ENCODE measurements at regions of chr5 and their contacts with region 1.

Region 1: DNA sequence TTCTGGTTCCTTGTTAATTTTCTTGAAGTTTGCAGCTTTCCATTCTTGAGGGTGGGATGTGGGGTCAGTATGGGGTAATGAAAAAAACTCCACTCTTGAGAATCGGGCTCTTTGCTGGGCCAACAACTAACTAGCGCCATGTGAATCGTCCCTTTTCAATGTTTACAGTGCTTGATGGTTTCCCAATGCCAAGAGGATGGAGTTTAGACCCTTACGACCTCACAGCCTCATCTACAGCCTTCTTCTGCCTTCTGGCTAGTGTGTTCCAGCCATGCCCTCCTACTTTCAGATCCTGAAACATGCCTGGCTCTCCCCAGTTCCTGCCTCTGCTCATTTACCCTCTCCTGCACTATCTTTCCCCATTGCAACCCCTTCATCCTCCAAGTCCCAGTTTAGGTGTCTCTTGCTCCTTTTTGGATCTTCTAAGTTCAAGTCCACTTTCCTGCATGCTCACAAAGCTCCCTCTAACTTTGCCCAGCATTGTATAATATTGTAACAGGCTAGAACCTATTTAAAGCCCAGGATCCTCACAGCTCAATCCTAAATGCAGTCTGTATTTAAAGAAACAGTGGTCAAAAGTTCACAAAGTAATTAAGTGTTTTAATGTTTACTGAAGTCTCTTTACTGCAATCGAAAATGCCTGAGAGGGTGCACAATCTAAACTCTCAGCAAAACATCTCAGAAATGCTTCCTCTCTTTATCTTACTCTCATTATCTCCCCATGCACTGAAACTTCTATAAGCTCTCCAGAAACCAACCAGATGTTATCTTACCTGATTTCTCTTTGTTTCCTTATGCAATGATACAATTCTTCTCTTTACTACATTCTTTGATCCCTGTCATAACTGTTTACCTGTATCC is 20.6 kb upstream of the CAST start:
- DNase-seq: peak; percentile 61 to 73
- H3K4me3 ChIP-seq: no peak overlapping the region
- H3K4me3 Mint-ChIP-seq: peak overlapping the region; percentile 55
- H3K27ac Mint-ChIP-seq: peak overlapping the region; percentile 86
- H3K4me1 ChIP-seq: peaks cover 61% of the 10 kb centered on the region
- H3K4me1 Mint-ChIP-seq: peaks cover 49% of the 10 kb centered on the region
- H3K27me3 ChIP-seq: no peaks in the 10 kb centered on the region
- H3K27me3 Mint-ChIP-seq: no peaks in the 10 kb centered on the region
- CTCF ChIP-seq: no peak

Region 2: GRCh38 chr5:96402500-96402899 is 239.1 kb before region 1 on chr5:
- CTCF ChIA-PET with region 1: no interaction called
- POLR2A ChIA-PET with region 1: no interaction called
- intact Hi-C with region 1: no loop called
- DNase-seq: no peak
- H3K4me3 ChIP-seq: no peak overlapping the region
- H3K4me3 Mint-ChIP-seq: no peak overlapping the region
- H3K27ac Mint-ChIP-seq: no peak overlapping the region
- H3K4me1 ChIP-seq: no peaks in the 10 kb centered on the region
- H3K4me1 Mint-ChIP-seq: no peaks in the 10 kb centered on the region
- H3K27me3 ChIP-seq: no peaks in the 10 kb centered on the region
- H3K27me3 Mint-ChIP-seq: peaks cover 3% of the 10 kb centered on the region
- CTCF ChIP-seq: no peak

Region 3: GRCh38 chr5:96562614-96563013 is 79.0 kb before region 1 on chr5:
- CTCF ChIA-PET with region 1: no interaction called
- POLR2A ChIA-PET with region 1: no interaction called
- intact Hi-C with region 1: no loop called
- DNase-seq: no peak
- H3K4me3 ChIP-seq: no peak overlapping the region
- H3K4me3 Mint-ChIP-seq: no peak overlapping the region
- H3K27ac Mint-ChIP-seq: no peak overlapping the region
- H3K4me1 ChIP-seq: no peaks in the 10 kb centered on the region
- H3K4me1 Mint-ChIP-seq: no peaks in the 10 kb centered on the region
- H3K27me3 ChIP-seq: peaks cover 2% of the 10 kb centered on the region; the same call in 1 of the 2 replicates
- H3K27me3 Mint-ChIP-seq: peaks cover 15% of the 10 kb centered on the region
- CTCF ChIP-seq: no peak

Region 4: DNA sequence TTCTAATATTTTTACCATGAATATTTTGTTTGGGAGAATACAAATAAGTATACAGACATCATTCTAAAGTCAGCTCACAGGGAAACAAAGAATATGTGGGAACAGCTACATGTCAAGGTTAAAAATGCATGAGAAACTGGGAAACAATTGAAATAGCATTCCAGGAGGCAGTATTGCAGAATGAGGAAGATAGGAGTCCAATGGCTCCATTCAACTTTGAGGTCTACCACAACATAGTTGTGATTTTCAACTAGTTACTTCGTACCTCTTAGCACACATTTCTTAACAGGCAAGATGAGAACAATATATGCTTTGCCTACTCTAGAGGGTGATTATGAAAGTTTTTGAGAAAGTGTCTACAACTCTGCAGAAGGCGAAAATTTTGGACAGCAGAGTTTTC is 14.6 kb before region 1 on chr5:
- CTCF ChIA-PET with region 1: interaction called, 3 read pairs
- POLR2A ChIA-PET with region 1: interaction called, 3 read pairs
- intact Hi-C with region 1: loop called (anchors 1 kb)
- DNase-seq: no peak
- H3K4me3 ChIP-seq: no peak overlapping the region
- H3K4me3 Mint-ChIP-seq: no peak overlapping the region
- H3K27ac Mint-ChIP-seq: peak overlapping the region; percentile 10
- H3K4me1 ChIP-seq: peaks cover 35% of the 10 kb centered on the region
- H3K4me1 Mint-ChIP-seq: peaks cover 48% of the 10 kb centered on the region
- H3K27me3 ChIP-seq: no peaks in the 10 kb centered on the region
- H3K27me3 Mint-ChIP-seq: no peaks in the 10 kb centered on the region
- CTCF ChIP-seq: no peak

Region 5: DNA sequence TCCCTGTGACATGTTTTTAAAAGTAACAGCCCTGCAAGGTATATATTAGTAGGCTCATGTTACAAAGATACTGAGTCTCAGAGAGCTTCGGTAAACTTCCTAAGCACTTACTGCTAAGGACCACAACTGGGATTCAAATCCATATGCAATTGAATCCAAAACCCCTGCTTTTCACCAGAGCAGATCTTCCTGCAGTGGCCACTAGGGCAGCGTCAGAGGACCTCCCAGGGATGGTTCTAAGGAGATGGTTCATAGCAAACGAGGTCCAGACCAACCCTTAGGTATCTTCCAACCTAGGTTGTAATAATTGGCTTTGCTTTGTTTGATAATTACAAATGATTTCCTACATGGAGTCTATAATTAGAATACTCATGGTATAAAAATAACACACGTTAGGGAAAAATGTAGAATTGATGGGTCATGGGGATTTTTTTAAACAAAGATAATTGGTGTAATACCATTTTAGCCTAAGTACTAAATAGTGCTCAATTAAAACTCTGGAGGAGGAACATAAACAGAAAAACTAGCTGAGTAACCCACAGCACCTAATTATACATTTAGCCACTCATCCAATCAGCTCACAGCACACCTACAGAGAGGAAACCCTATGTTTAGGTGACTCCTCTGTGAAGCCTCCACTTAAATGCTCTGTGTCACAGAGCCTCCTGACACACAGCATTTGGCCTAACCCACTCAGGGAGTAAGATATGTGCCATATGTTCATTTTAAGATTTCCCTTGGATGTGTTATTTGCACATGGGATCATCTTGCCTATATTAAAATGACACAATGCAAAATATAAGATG is 10.6 kb after region 1 on chr5:
- CTCF ChIA-PET with region 1: no interaction called
- POLR2A ChIA-PET with region 1: interaction called, 5 read pairs
- intact Hi-C with region 1: loop called (anchors 1 kb)
- DNase-seq: no peak
- H3K4me3 ChIP-seq: no peak overlapping the region
- H3K4me3 Mint-ChIP-seq: no peak overlapping the region
- H3K27ac Mint-ChIP-seq: no peak overlapping the region
- H3K4me1 ChIP-seq: peaks cover 65% of the 10 kb centered on the region
- H3K4me1 Mint-ChIP-seq: peaks cover 61% of the 10 kb centered on the region
- H3K27me3 ChIP-seq: no peaks in the 10 kb centered on the region
- H3K27me3 Mint-ChIP-seq: no peaks in the 10 kb centered on the region
- CTCF ChIP-seq: peak; percentile 14 to 21

Region 6: DNA sequence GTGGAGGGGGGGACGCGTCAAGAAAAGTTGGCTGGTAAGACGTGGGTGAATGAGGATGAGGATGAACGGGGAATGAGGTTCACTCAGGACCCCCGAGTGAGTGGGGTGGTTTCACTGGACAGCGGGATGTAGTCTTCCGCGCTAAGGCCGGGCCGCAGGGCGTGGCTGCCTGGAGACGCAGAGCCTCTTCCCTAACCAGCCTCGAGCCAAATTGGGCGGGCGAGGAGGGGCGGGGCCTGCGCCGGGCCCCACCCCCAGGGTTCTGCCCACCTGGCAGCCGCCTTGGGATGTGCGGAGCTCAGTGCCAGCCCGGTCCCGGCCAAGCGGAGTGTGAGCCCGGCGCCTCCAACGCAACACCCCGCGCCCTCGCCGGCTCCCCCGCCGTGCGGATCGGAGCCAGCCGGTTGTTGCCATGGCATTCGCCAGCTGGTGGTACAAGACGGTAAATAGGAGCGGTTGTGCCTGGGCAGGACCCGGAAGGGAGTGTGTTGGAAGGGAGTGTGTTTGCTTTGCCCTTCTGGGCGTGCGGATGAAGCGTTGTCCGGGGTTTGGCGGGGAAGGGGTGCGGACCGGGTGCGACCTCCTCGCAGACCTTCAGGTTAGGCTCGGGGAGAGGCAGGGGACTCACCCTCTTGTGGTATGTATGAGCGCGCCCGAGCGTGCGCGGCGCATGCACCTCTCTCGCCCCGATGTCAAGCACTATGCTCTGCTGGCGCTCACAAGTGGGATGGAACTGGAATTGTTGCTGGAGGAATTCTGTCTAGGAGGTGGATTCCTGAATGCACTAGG is 21.3 kb after region 1 on chr5:
- CTCF ChIA-PET with region 1: interaction called, 7 read pairs
- POLR2A ChIA-PET with region 1: interaction called, 23 read pairs
- intact Hi-C with region 1: loop called (anchors 1 kb)
- DNase-seq: peak; percentile 89 to 93
- H3K4me3 ChIP-seq: peak overlapping the region; percentile 90
- H3K4me3 Mint-ChIP-seq: peak overlapping the region; percentile 81
- H3K27ac Mint-ChIP-seq: peak overlapping the region; percentile 86
- H3K4me1 ChIP-seq: peaks cover 45% of the 10 kb centered on the region
- H3K4me1 Mint-ChIP-seq: peaks cover 34% of the 10 kb centered on the region
- H3K27me3 ChIP-seq: no peaks in the 10 kb centered on the region
- H3K27me3 Mint-ChIP-seq: no peaks in the 10 kb centered on the region
- CTCF ChIP-seq: peak in 1 of 2 experiments; percentile 3

Region 7: DNA sequence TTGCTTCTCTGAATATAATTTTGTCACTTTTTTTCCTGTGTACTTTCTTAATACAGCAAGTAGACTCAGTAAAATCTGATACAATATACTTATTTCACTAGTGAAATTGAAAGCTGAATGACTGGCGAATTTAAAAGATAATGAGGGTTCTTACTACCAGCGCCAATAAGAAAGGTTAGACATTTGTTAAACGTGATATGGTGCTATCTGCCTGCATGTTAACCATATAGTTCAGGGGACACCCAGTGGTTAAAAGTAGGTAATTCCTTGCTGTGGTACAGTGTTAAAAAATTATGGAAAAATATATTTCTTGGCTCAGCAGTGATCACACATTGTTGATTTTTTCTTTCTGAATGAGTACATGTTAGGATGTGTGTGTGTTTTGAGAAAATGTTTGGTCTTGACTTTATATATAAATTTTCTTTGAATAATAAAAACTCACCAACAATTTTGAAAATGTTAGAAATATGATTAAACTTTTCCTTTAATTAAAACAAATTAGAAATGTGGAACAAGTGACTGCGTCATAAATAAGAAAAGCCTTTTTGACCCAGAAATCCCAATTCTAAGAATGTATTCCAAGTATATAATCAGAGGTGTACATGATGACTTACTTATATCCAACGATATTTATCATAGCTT is 46.3 kb after region 1 on chr5:
- CTCF ChIA-PET with region 1: no interaction called
- POLR2A ChIA-PET with region 1: no interaction called
- intact Hi-C with region 1: loop called (anchors 1 kb)
- DNase-seq: peak in 1 of 2 experiments; percentile 38
- H3K4me3 ChIP-seq: no peak overlapping the region
- H3K4me3 Mint-ChIP-seq: no peak overlapping the region
- H3K27ac Mint-ChIP-seq: no peak overlapping the region
- H3K4me1 ChIP-seq: peaks cover 10% of the 10 kb centered on the region
- H3K4me1 Mint-ChIP-seq: peaks cover 24% of the 10 kb centered on the region
- H3K27me3 ChIP-seq: no peaks in the 10 kb centered on the region
- H3K27me3 Mint-ChIP-seq: no peaks in the 10 kb centered on the region
- CTCF ChIP-seq: peak; percentile 61 to 65

Region 8: GRCh38 chr5:96714951-96715451 is 73.4 kb after region 1 on chr5:
- CTCF ChIA-PET with region 1: no interaction called
- POLR2A ChIA-PET with region 1: interaction called, 4 read pairs
- intact Hi-C with region 1: loop called (anchors 1 kb)
- DNase-seq: peak; percentile 72 to 83
- H3K4me3 ChIP-seq: no peak overlapping the region
- H3K4me3 Mint-ChIP-seq: peak overlapping the region; percentile 34
- H3K27ac Mint-ChIP-seq: peak overlapping the region; percentile 92
- H3K4me1 ChIP-seq: peaks cover 36% of the 10 kb centered on the region
- H3K4me1 Mint-ChIP-seq: peaks cover 53% of the 10 kb centered on the region
- H3K27me3 ChIP-seq: no peaks in the 10 kb centered on the region
- H3K27me3 Mint-ChIP-seq: no peaks in the 10 kb centered on the region
- CTCF ChIP-seq: no peak

Measured in Caco-2 (cell line).